A549 (cell line): ENCODE measurements at regions of chr16 and their contacts with region 1.

Region 1: DNA sequence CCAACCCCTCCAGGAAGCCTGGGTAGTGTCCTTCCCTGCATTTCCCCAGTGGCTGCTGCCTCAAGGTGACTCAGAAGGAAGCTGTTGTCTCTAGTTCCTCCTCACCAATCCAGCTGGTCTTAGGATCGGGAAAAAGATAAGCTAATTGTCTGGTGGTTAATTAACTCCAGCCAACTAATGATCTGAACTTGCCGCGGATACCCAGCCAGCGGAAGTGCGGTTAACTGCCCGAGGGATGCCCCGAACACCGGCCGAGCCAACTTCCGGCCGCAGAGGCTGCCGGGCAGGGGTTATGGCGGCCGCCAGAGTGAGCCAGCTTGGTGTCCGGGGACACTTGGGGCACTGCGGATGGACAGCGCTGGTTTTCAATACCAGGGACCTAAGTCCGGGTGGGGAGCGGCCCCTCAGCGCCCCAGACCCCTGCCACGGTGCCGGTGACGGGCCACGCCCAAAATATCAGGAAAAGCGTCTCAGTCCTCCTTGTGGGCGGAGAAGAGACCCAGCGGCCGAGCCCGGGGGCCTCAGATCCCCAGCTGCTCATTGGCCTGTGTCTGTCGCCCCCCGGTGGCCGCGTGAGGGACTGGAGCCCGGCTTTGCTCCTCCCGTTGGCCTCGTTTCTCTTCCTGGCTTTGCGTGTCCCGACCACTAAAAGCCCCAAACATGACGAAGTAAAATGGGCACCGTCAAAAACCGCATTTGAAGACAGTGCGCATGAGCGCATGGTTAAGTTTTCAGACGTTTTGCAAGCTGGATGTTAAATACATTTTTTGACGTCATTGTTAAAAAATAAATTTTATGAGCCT is 10.2 kb upstream of the PRSS22 start:
- DNase-seq: peak; percentile 96 to 98
- ATAC-seq: peak; percentile 98 to 99
- H3K4me3 ChIP-seq: peak overlapping the region; percentile 59
- H3K27ac ChIP-seq: peak overlapping the region; percentile 90 to 95
- H3K4me1 ChIP-seq: 0 out of 3 replicates have a peak, but pooled peaks cover 3% of the 10 kb centered on the region
- CTCF ChIP-seq: peak; percentile 95
- EP300 ChIP-seq: no peak
- POLR2A ChIP-seq: peak; percentile 71
- RAD21 ChIP-seq: peak; percentile 92 to 99

Region 2: GRCh38 chr16:2752035-2752849 is 115.9 kb before region 1 on chr16 and contains the start of gene SRRM2:
- CTCF ChIA-PET with region 1: interaction called, 10 read pairs
- POLR2A ChIA-PET with region 1: interaction called, 13 read pairs
- DNase-seq: peak; percentile 96 to 98
- ATAC-seq: peak; percentile 92
- H3K4me3 ChIP-seq: peak within 1 kb of the TSS; percentile 75
- H3K27ac ChIP-seq: peak within 1 kb of the TSS; percentile 98 to 100
- H3K4me1 ChIP-seq: peaks cover 33% of the 10 kb centered on the region
- CTCF ChIP-seq: no peak
- EP300 ChIP-seq: no peak
- POLR2A ChIP-seq: peak; percentile 70
- RAD21 ChIP-seq: no peak
- polyA plus RNA-seq, gene SRRM2: 167 and 231 TPM in 2 replicates

Region 3: DNA sequence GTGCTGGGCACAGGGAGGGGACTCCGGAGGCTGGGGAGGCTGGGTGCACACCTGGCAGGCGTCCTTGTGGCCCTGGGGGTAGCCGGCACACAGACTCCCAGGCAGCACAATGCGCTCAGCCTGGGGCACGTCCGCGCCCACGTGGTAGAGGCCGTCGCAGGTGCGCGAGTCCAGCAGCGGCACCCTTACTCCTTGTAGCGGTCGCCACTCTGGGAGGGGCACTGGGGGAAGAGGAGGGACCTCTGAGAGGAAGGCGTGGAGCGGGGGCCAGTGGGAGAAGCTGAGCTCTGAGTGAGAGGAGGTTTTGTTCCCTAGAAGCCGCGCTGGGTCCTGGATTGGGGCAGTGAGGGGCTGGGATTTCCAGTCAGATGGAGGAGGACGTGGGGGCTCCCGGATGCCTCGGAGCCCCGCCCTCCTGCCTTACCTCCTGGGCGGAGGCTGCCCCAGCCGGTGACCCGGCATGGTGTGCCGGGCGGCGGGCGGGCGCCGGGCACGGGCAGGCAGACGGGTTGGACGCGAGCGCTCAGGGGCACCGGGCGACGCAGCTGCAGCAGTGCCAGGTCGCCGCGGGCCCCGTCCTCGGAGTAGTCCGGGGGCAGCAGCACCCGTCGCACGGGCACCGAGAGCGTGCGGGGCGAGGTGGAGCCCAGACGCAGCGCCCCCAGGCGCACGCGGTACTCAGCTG is 83.1 kb before region 1 on chr16:
- CTCF ChIA-PET with region 1: interaction called, 17 read pairs
- POLR2A ChIA-PET with region 1: no interaction called
- DNase-seq: no peak
- ATAC-seq: no peak
- H3K4me3 ChIP-seq: no peak overlapping the region
- H3K27ac ChIP-seq: no peak overlapping the region
- H3K4me1 ChIP-seq: no peaks in the 10 kb centered on the region
- CTCF ChIP-seq: no peak
- EP300 ChIP-seq: no peak
- POLR2A ChIP-seq: no peak
- RAD21 ChIP-seq: no peak

Region 4: GRCh38 chr16:2846511-2847310 is 21.5 kb before region 1 on chr16:
- CTCF ChIA-PET with region 1: interaction called, 55 read pairs
- POLR2A ChIA-PET with region 1: no interaction called
- DNase-seq: peak; percentile 67 to 81
- ATAC-seq: peak; percentile 80 to 93
- H3K4me3 ChIP-seq: no peak overlapping the region
- H3K27ac ChIP-seq: peak overlapping the region; percentile 78 to 94
- H3K4me1 ChIP-seq: peaks cover 27% of the 10 kb centered on the region
- CTCF ChIP-seq: no peak
- EP300 ChIP-seq: peak; percentile 84 to 90; a peak in 2 of 5 replicates
- POLR2A ChIP-seq: no peak
- RAD21 ChIP-seq: no peak

Region 5: DNA sequence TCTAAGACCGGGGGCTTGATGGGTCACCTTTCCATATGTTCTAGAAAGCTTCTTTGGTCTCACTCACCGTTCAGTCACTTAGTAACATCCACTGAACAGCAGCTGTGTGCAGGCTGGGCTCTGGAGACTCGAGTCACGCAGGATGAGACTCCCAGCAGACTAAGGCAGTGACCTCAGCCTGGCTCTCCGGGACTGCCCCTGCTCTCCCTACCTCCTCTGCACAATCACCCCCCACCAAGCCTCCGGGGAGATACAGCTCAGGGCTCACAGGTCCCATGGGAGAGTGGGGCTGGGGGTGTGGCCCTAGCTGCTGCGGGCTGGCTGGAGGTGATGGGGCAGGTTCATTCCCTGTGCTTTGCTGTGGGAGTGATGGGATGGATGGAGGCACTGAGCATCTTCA is 28.9 kb after region 1 on chr16:
- CTCF ChIA-PET with region 1: interaction called, 13 read pairs
- POLR2A ChIA-PET with region 1: no interaction called
- DNase-seq: no peak
- ATAC-seq: no peak; a peak in 2 of 6 replicates
- H3K4me3 ChIP-seq: no peak overlapping the region
- H3K27ac ChIP-seq: no peak overlapping the region
- H3K4me1 ChIP-seq: peaks cover 22% of the 10 kb centered on the region
- CTCF ChIP-seq: no peak
- EP300 ChIP-seq: no peak
- POLR2A ChIP-seq: no peak
- RAD21 ChIP-seq: no peak

Region 6: DNA sequence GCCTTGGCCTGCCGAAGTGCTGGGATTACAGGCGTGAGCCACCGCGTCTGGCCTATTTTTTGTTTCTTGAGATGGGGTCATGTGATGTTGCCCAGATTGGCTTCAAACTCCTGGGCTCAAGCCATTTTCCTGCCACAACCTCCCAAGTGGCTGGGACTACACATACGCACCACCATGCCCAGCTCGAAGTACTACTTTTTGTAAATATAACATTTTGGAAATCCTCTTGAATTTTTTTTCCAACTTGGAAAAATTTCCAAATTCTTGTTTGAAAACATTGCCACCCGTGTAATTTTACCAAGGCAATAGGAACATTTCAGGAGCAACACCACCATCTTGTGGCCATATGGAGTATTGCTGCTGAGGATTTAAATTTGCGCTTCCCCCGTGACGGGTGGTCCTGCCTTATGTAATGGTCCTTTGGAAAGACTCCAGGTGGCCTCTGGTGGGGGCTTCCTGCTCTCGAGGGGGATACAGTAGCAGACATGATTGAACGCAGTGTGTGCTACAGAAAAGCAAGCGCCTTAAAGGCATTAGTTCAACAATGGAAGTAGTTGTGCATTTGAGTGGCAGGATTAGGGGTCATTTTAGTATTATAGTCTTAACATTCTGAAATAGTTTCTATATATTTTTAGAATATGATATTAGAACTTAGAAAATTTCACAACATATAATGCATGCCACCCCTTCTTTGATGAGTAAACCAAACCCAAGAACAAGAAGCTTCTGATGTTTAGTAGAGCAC is 51.5 kb after region 1 on chr16:
- CTCF ChIA-PET with region 1: interaction called, 56 read pairs
- POLR2A ChIA-PET with region 1: interaction called, 5 read pairs
- DNase-seq: peak; percentile 61 to 73
- ATAC-seq: peak; percentile 69 to 71; a peak in 5 of 6 replicates
- H3K4me3 ChIP-seq: no peak overlapping the region
- H3K27ac ChIP-seq: no peak overlapping the region
- H3K4me1 ChIP-seq: peaks cover 13% of the 10 kb centered on the region
- CTCF ChIP-seq: peak; percentile 88
- EP300 ChIP-seq: no peak
- POLR2A ChIP-seq: no peak
- RAD21 ChIP-seq: peak; percentile 81